HepG2 (cell line): ENCODE measurements at regions of chr12 and their contacts with region 1.

Region 1: GRCh38 chr12:30847259-30847658 is 79.3 kb upstream of the TSPAN11 start:
- DNase-seq: peak; percentile 66
- ATAC-seq: peak; percentile 18; the same call in 1 of the 3 replicates
- H3K4me3 ChIP-seq: no peak overlapping the region
- H3K27ac ChIP-seq: no peak overlapping the region
- H3K4me1 ChIP-seq: no peaks in the 10 kb centered on the region
- H3K27me3 ChIP-seq: no peaks in the 10 kb centered on the region
- CTCF ChIP-seq: peak; percentile 74
- EP300 ChIP-seq: no peak
- POLR2A ChIP-seq: no peak
- RAD21 ChIP-seq: peak; percentile 83

Region 2: GRCh38 chr12:29073628-29074239 is 1773.5 kb before region 1 on chr12:
- CTCF ChIA-PET with region 1: no interaction called
- POLR2A ChIA-PET with region 1: no interaction called
- in situ Hi-C with region 1: no loop called
- intact Hi-C with region 1: loop called (anchors 10 kb)
- DNase-seq: peak; percentile 13
- ATAC-seq: peak; percentile 74
- H3K4me3 ChIP-seq: no peak overlapping the region
- H3K27ac ChIP-seq: no peak overlapping the region
- H3K4me1 ChIP-seq: no peaks in the 10 kb centered on the region
- H3K27me3 ChIP-seq: no peaks in the 10 kb centered on the region
- CTCF ChIP-seq: peak; percentile 57
- EP300 ChIP-seq: no peak
- POLR2A ChIP-seq: no peak
- RAD21 ChIP-seq: no peak

Region 3: GRCh38 chr12:29545102-29545467 is 1302.2 kb before region 1 on chr12:
- CTCF ChIA-PET with region 1: no interaction called
- POLR2A ChIA-PET with region 1: no interaction called
- in situ Hi-C with region 1: loop called (anchors 25 kb)
- intact Hi-C with region 1: loop called (anchors 10 kb)
- DNase-seq: no peak
- ATAC-seq: no peak
- H3K4me3 ChIP-seq: no peak overlapping the region
- H3K27ac ChIP-seq: no peak overlapping the region
- H3K4me1 ChIP-seq: no peaks in the 10 kb centered on the region
- H3K27me3 ChIP-seq: no peaks in the 10 kb centered on the region
- CTCF ChIP-seq: no peak
- EP300 ChIP-seq: no peak
- POLR2A ChIP-seq: no peak
- RAD21 ChIP-seq: no peak

Region 4: GRCh38 chr12:30795410-30796312 is 51.6 kb before region 1 on chr12:
- CTCF ChIA-PET with region 1: no interaction called
- POLR2A ChIA-PET with region 1: no interaction called
- in situ Hi-C with region 1: no loop called
- intact Hi-C with region 1: no loop called
- DNase-seq: peak; percentile 48
- ATAC-seq: peak; percentile 92
- H3K4me3 ChIP-seq: peak overlapping the region; percentile 62 to 77 (median 64)
- H3K27ac ChIP-seq: no peak overlapping the region
- H3K4me1 ChIP-seq: peaks cover 42% of the 10 kb centered on the region
- H3K27me3 ChIP-seq: no peaks in the 10 kb centered on the region
- CTCF ChIP-seq: peak; percentile 12; the same call in 1 of the 2 replicates
- EP300 ChIP-seq: no peak
- POLR2A ChIP-seq: no peak
- RAD21 ChIP-seq: no peak

Region 5: DNA sequence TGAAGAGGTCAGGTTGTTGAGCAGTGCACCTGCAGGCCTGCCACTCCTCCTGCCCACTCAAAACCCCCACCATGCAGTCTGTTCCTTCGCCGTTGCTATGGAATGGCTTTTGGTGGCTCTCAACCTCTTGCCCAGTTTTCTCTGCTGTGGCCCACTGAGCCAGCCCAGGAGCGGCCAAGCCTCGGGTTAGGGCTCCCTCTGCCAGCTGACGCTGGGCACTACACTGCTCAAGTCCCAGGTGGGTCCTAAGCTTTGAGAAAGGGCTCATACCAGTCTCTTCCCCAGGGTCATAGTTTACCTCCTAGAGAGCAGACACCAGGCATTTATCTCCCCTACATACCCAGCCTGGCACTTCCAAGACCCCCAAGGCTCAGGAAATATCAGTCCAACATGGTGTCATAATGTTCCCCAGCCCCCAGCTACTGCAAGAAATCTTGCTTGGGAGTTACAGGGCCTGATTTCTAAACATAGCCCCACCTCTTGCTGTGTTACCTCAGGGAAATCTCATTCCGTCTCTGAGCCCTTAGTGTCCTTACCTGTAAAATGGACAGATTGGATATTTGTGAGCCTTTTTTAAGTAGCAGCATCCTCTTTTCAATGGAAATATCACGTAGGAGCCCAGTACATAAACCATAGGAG is 138.7 kb after region 1 on chr12:
- CTCF ChIA-PET with region 1: interaction called, 24 read pairs
- POLR2A ChIA-PET with region 1: no interaction called
- in situ Hi-C with region 1: loop called (anchors 5 kb)
- intact Hi-C with region 1: loop called (anchors 1 kb)
- DNase-seq: peak; percentile 33
- ATAC-seq: peak; percentile 90
- H3K4me3 ChIP-seq: no peak overlapping the region
- H3K27ac ChIP-seq: no peak overlapping the region
- H3K4me1 ChIP-seq: no peaks in the 10 kb centered on the region
- H3K27me3 ChIP-seq: peaks cover 2 to 19% of the 10 kb centered on the region in 2 experiments
- CTCF ChIP-seq: peak; percentile 83
- EP300 ChIP-seq: no peak
- POLR2A ChIP-seq: no peak
- RAD21 ChIP-seq: peak; percentile 72

Region 6: DNA sequence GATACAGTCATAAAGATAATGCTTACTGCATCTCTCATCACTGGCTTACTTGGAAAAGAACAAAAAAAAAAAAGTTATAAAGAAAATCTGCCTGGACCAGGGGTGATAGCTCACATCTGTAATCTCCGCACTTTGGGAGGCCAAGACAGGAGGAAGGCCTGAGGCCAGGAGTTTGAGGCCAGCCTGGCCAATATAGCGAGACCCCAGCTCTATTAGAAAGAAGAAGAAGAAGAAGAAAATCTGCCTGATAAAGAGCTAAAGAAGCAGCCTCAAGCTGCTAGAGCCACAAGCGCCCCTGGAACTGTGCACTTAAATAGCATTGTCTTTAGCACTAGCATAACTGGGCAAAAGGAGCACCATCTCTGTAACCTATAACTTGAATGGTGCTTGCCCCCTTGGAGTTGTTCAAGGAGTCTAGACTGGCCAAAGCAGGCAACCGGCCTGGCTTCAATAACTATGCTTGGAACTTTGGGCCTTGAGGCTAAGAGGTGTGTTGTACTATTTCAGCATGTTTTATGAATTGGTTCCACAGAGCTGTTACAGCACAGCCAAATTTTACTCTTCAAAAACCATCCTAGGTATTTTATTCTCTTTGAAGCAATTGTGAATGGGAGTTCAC is 425.5 kb after region 1 on chr12:
- CTCF ChIA-PET with region 1: interaction called, 4 read pairs
- POLR2A ChIA-PET with region 1: no interaction called
- in situ Hi-C with region 1: no loop called
- intact Hi-C with region 1: loop called (anchors 1 kb)
- DNase-seq: no peak
- ATAC-seq: peak; percentile 25
- H3K4me3 ChIP-seq: no peak overlapping the region
- H3K27ac ChIP-seq: no peak overlapping the region
- H3K4me1 ChIP-seq: no peaks in the 10 kb centered on the region
- H3K27me3 ChIP-seq: no peaks in the 10 kb centered on the region
- CTCF ChIP-seq: no peak
- EP300 ChIP-seq: no peak
- POLR2A ChIP-seq: no peak
- RAD21 ChIP-seq: no peak